Right cardiac atrium (tissue), 5 donors: ENCODE measurements at regions of chr10 and their contacts with region 1.

Region 1: DNA sequence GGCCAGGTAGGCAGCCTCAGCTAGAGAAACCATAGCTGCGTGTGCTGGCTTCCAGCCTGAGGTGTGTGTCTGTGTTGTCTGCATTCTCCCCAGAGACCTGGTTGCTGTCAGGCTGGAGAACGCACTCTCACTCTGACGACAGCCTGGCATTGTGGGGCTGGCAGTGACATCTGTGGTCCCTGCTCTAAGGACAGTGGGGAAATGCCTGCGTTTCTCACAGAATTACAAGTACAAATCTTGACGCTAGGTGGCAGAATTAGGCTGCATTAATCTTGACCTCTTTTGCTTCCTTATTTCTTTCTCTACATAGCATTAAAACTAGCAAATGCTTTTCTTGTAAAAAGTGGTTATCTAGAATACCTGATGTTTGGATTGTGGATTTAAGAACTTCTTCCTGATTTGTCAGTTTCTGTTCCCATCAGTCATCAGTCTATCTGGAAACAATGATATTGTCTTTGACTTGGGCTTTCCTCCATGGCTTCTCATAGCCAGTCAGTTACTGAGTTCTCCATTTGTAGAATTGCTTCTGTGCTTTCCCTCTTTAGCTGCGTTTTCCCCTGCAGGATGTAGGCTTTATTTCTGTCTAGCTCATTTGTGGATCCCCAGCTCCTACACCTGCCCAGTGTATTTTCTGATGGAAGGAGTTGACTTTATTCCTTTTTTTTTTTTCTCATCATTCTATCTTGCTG is 86.0 kb downstream of the FANK1 start:
- DNase-seq: no peak
- ATAC-seq: peak; percentile 61 to 69
- H3K4me3 ChIP-seq: no peak overlapping the region
- H3K27ac ChIP-seq: no peak overlapping the region
- H3K4me1 ChIP-seq: no peaks in the 10 kb centered on the region
- H3K27me3 ChIP-seq: no peaks in the 10 kb centered on the region

Region 2: DNA sequence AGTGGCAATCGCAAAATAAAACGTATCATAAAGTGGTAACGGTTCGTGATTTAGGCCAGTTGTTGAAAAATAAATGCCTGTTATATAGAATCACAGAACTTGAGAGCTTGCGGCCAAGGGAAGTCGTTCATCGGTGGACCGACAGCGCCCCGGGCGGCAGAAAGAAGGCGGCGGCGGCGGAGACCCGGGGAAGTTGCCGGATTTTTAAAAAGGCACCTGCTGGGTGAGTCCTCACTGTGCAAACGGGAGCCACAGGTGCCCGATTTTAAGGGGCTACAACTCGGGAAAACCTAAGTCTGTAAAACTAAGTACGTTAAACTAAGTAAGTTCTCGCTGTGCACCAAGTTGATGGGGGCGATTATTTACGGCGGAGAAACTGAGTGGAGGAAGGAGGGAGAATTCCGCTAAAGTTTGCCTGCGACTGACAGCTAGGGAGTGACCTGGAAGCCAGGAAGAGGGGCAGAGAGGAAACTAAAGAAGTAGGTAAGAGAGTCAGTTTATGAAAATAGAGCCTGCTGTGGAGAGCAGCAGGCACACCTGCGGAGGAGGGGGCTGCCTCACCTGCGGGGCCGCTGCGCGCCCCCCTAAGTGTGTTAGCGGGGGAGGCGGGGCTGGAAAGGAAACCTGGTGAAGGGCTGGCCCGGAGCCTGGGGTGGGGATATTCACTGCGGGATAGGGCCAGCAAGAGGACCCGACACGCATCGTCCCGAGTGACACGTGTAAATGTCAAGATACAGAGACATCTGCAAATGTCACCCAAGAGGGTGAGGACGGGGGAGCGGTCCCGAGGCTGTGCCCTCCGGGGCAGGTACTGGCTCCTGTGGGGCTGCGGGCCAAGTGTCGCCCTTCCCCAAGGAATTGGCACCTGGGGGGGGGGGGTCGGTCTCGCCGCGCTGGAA is 404.9 kb after region 1 on chr10:
- intact Hi-C with region 1: loop called (anchors 2 to 10 kb)
- DNase-seq: peak; percentile 60 to 84 (median 83)
- ATAC-seq: peak; percentile 51 to 54
- H3K4me3 ChIP-seq: peak overlapping the region; percentile 54
- H3K27ac ChIP-seq: no peak overlapping the region
- H3K4me1 ChIP-seq: peaks cover 2% of the 10 kb centered on the region
- H3K27me3 ChIP-seq: peaks cover 3% of the 10 kb centered on the region

Region 3: DNA sequence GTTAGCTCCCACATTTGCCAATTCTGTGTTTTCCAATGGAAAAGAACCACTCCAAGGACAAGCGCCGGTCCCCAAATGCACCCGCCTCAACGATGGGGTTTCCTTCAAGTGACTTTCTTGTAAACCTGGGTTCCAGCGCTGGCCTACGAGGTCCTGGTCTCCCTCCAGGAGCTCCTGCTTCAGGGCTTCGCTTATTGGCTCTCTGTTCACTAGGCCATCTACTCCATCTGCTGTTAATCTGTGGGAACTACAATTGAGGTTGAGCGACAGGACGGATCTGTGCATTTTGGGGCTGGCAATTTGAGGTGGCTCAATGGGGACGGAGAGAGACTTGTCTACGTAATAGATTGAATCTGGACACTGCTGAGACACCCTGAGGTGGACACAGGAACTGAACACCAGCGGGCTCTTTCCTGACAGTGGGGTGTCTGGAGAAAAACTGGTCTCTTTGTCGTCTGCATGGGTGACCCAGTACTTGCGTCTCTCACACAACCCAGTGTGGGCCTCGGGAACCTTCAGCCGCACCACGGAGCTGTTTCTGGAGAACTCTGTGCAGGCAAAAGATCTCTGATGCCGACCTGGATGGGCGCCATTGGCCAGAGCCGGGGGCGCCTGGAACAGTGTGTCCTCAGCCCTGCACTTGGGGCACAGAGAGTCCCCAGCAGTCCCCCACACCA is 521.8 kb after region 1 on chr10:
- intact Hi-C with region 1: loop called (anchors 1 to 10 kb)
- DNase-seq: peak; percentile 30 to 50 (median 46)
- ATAC-seq: peak; percentile 69 to 79
- H3K4me3 ChIP-seq: no peak overlapping the region
- H3K27ac ChIP-seq: no peak overlapping the region
- H3K4me1 ChIP-seq: no peaks in the 10 kb centered on the region
- H3K27me3 ChIP-seq: no peaks in the 10 kb centered on the region

Region 4: GRCh38 chr10:126749015-126749655 is 766.7 kb after region 1 on chr10:
- intact Hi-C with region 1: loop called in 1 of 4 experiments (anchors 5 kb)
- DNase-seq: peak; percentile 68 to 87 (median 82)
- ATAC-seq: peak; percentile 48 to 82
- H3K4me3 ChIP-seq: no peak overlapping the region
- H3K27ac ChIP-seq: no peak overlapping the region
- H3K4me1 ChIP-seq: no peaks in the 10 kb centered on the region
- H3K27me3 ChIP-seq: no peaks in the 10 kb centered on the region

Region 5: GRCh38 chr10:127313996-127314700 is 1331.7 kb after region 1 on chr10:
- intact Hi-C with region 1: no loop called
- DNase-seq: no peak
- ATAC-seq: no peak
- H3K4me3 ChIP-seq: no peak overlapping the region
- H3K27ac ChIP-seq: no peak overlapping the region
- H3K4me1 ChIP-seq: peaks cover 10% of the 10 kb centered on the region
- H3K27me3 ChIP-seq: no peaks in the 10 kb centered on the region

Region 6: GRCh38 chr10:127853868-127854768 is 1871.7 kb after region 1 on chr10:
- intact Hi-C with region 1: loop called in 1 of 4 experiments (anchors 10 kb)
- DNase-seq: peak; percentile 59 to 83 (median 78)
- ATAC-seq: peak; percentile 89
- H3K4me3 ChIP-seq: no peak overlapping the region
- H3K27ac ChIP-seq: no peak overlapping the region
- H3K4me1 ChIP-seq: no peaks in the 10 kb centered on the region
- H3K27me3 ChIP-seq: no peaks in the 10 kb centered on the region